ENCODE measurements at regions of chr17 and their contacts with region 1.

Region 1: GRCh38 chr17:81871387-81872230 is 472 bp upstream of the ARHGDIA start:
- DNase-seq: peak; percentile 96
- ATAC-seq: peak; percentile 8
- H3K4me3 Mint-ChIP-seq: peak overlapping the region; percentile 83
- H3K27ac Mint-ChIP-seq: peak overlapping the region; percentile 97
- H3K4me1 Mint-ChIP-seq: peaks cover 37% of the 10 kb centered on the region
- H3K27me3 Mint-ChIP-seq: no peaks in the 10 kb centered on the region

Region 2: GRCh38 chr17:81860756-81861518 is 10.7 kb before region 1 on chr17:
- CTCF ChIA-PET with region 1: interaction called, 11 read pairs
- POLR2A ChIA-PET with region 1: interaction called, 16 read pairs
- DNase-seq: peak; percentile 100
- ATAC-seq: peak; percentile 89
- H3K4me3 Mint-ChIP-seq: peak overlapping the region; percentile 96
- H3K27ac Mint-ChIP-seq: peak overlapping the region; percentile 99
- H3K4me1 Mint-ChIP-seq: peaks cover 46% of the 10 kb centered on the region
- H3K27me3 Mint-ChIP-seq: no peaks in the 10 kb centered on the region

Region 3: DNA sequence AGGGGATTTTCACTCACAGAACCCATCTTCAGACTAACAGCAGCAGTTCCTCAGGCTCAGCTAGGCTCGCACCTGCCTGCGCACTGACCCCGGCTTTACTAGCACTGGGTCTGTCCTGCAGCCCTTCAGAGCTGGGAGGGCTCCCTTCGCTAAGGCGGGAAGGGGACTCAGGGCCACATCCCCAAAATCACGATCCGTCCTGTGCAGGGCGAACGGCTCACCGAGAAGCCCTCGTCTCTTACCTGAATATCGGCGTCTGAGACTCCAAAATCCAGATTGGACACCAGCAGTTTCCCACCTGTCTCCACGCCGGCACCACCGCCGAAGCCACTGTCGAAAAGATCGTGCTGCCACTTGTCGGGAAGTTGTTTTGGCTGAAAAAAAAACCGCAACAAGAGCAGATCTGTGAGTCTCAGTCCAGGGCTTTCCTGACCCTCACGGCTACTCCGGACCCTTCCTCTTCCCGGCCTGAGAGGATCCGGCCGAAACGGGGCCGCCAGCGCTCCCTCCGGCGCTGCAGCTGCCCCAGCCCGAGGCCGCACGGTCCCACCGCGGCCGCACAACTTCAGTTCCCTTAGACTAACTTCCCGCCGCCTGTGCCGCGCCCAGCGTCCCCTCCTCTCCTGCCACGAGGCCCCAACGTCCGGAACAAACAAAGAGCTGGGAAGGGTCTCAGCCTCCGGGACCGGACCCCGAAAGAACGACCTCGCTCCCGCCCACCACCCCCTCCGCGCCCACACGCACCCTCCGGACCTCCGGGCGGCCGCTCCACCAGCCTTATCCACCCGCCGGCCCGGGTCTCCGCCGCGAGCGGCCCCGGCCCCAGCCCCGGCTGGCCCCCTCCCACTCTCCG is 19.1 kb after region 1 on chr17:
- CTCF ChIA-PET with region 1: interaction called, 6 read pairs
- POLR2A ChIA-PET with region 1: interaction called, 23 read pairs
- DNase-seq: peak; percentile 55
- ATAC-seq: peak; percentile 9
- H3K4me3 Mint-ChIP-seq: peak overlapping the region; percentile 91
- H3K27ac Mint-ChIP-seq: peak overlapping the region; percentile 97
- H3K4me1 Mint-ChIP-seq: peaks cover 32% of the 10 kb centered on the region
- H3K27me3 Mint-ChIP-seq: no peaks in the 10 kb centered on the region